ENCODE measurements at regions of chr12 and their contacts with region 1.

Region 1: DNA sequence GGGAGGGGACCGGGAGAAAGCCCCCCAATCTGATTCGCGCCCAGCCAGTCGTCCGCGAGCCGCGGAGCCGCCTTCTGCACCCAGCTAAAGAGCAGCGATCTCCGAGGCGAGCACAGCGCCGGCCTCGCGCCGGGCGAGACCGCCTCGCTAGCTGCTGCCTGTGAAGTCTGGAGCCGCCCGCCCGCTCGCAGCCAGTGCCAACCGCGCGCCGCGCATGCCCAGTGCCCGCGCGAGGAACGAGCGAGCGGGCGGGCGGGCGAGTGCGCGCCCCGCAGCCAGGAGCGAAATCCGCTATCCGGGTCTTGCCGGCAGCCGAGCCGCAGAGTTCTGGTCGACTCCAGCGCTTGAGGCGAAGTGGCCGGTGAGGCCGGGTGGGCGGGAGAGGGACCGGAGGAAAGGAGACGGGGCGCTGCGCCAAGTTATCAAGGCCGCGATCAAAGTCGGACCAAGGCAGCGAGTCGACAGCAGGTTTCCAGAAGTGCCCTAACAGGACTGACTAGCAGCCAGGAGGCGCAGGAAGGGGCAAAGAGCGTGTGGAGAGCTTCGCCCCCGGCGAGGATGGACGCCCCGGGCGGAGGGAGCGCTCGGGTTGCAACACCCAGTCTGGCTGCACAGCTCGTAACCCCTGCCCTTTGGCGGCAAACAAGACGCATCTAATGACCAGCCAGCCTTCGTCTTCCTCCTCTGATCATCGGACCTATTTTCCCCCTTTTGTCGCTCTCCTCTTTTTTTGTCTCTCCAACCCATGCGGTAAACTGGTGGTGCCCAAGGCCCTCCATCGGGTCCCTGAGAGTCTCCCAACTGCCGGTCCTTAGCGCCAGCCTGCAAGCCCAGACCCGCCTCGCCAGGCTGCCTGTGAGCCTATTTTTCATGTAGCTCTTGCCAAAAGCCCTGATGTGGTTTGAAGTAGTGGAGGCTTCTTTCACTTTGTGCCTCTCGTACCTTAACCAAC is at the start of gene EPS8:
- DNase-seq: peak; percentile 88
- H3K4me3 Mint-ChIP-seq: peak within 1 kb of the TSS; percentile 85
- H3K27ac Mint-ChIP-seq: peak within 1 kb of the TSS; percentile 91
- H3K4me1 Mint-ChIP-seq: peaks cover 28% of the 10 kb centered on the region
- H3K27me3 Mint-ChIP-seq: no peaks in the 10 kb centered on the region
- CTCF ChIP-seq: no peak
- total RNA-seq, gene EPS8: 85.3 and 96.2 TPM in 2 replicates

Region 2: DNA sequence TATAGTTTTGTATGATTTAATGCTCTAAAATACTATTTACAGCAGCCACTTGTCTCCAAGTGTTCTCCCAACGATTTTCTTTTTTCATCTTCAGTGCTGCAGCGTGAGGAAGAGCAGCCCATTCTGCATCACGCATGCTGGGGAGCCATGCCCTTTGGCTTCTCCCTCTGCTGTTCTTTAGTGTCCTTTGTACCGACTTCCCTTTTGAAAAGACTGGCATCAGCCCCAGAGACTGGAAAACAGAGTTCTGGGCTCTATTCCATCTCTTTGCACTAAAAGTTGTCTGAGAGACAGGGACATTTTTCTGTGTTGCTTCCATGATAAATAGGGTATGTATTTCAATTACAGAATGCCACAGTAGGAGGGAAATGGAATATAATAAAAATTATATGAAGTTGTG is 673.4 kb before region 1 on chr12:
- CTCF ChIA-PET with region 1: no interaction called
- POLR2A ChIA-PET with region 1: no interaction called
- intact Hi-C with region 1: no loop called
- DNase-seq: no peak
- H3K4me3 Mint-ChIP-seq: no peak overlapping the region
- H3K27ac Mint-ChIP-seq: no peak overlapping the region
- H3K4me1 Mint-ChIP-seq: no peaks in the 10 kb centered on the region
- H3K27me3 Mint-ChIP-seq: no peaks in the 10 kb centered on the region
- CTCF ChIP-seq: no peak

Region 3: GRCh38 chr12:15599266-15600037 is 190.0 kb before region 1 on chr12:
- CTCF ChIA-PET with region 1: interaction called, 3 read pairs
- POLR2A ChIA-PET with region 1: interaction called, 10 read pairs
- intact Hi-C with region 1: no loop called
- DNase-seq: peak; percentile 96
- H3K4me3 Mint-ChIP-seq: no peak overlapping the region
- H3K27ac Mint-ChIP-seq: peak overlapping the region; percentile 11
- H3K4me1 Mint-ChIP-seq: peaks cover 28% of the 10 kb centered on the region
- H3K27me3 Mint-ChIP-seq: no peaks in the 10 kb centered on the region
- CTCF ChIP-seq: no peak

Region 4: GRCh38 chr12:15700595-15700994 is 88.9 kb before region 1 on chr12:
- CTCF ChIA-PET with region 1: no interaction called
- POLR2A ChIA-PET with region 1: interaction called, 32 read pairs
- intact Hi-C with region 1: loop called (anchors 5 kb)
- DNase-seq: peak; percentile 85
- H3K4me3 Mint-ChIP-seq: peak overlapping the region; percentile 13
- H3K27ac Mint-ChIP-seq: peak overlapping the region; percentile 96
- H3K4me1 Mint-ChIP-seq: peaks cover 49% of the 10 kb centered on the region
- H3K27me3 Mint-ChIP-seq: no peaks in the 10 kb centered on the region
- CTCF ChIP-seq: no peak

Region 5: GRCh38 chr12:15801770-15802744 is 12.6 kb after region 1 on chr12:
- CTCF ChIA-PET with region 1: interaction called, 5 read pairs
- POLR2A ChIA-PET with region 1: interaction called, 60 read pairs
- intact Hi-C with region 1: no loop called
- DNase-seq: peak; percentile 83
- H3K4me3 Mint-ChIP-seq: peak overlapping the region; percentile 41
- H3K27ac Mint-ChIP-seq: peak overlapping the region; percentile 63
- H3K4me1 Mint-ChIP-seq: peaks cover 26% of the 10 kb centered on the region
- H3K27me3 Mint-ChIP-seq: no peaks in the 10 kb centered on the region
- CTCF ChIP-seq: no peak

Region 6: GRCh38 chr12:15842108-15842507 is 52.6 kb after region 1 on chr12:
- CTCF ChIA-PET with region 1: no interaction called
- POLR2A ChIA-PET with region 1: interaction called, 10 read pairs
- intact Hi-C with region 1: no loop called
- DNase-seq: peak; percentile 68
- H3K4me3 Mint-ChIP-seq: no peak overlapping the region
- H3K27ac Mint-ChIP-seq: no peak overlapping the region
- H3K4me1 Mint-ChIP-seq: peaks cover 12% of the 10 kb centered on the region
- H3K27me3 Mint-ChIP-seq: no peaks in the 10 kb centered on the region
- CTCF ChIP-seq: no peak

Region 7: GRCh38 chr12:15868186-15868585 is 78.7 kb after region 1 on chr12:
- CTCF ChIA-PET with region 1: no interaction called
- POLR2A ChIA-PET with region 1: no interaction called
- intact Hi-C with region 1: no loop called
- DNase-seq: no peak
- H3K4me3 Mint-ChIP-seq: no peak overlapping the region
- H3K27ac Mint-ChIP-seq: no peak overlapping the region
- H3K4me1 Mint-ChIP-seq: no peaks in the 10 kb centered on the region
- H3K27me3 Mint-ChIP-seq: no peaks in the 10 kb centered on the region
- CTCF ChIP-seq: no peak

Measured in MCF 10A (cell line).